ENCODE measurements at regions of chr11 and their contacts with region 1.

Region 1: DNA sequence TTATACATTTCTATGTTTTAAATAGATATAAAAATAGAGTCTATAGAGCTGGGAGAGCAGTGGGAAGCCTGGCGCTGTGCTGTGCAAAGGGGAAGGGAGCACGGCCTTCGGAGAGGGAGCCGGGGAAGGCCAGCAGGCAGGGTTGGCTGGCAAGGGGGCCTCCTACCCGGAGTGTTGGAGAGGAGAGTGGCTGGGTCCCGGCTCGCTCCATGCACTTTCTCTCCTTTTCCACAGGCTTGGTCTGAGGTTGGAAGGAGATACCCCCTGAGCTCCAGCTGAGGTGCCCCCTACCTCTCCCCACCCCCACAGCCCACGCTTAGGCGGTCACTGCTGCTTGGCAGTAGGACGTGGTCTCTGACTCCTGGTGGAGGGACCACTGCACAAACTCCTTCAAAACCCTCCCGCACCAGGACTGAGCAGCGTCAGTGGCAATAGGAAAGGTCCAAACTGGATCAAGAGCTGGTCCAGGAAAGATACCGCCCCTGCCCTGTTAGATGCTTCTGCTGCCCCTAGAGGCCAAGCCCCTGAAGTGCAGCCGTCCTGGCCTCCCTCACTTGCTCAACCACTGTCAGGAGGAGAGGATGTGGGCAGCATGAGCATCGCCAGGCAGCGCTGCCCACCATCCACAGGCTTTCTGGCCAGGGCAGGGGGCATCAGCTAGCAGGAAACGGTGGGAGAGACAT is 52.9 kb downstream of the SYT13 start:
- DNase-seq: peak; percentile 53 to 94
- H3K4me3 ChIP-seq: peak overlapping the region in 1 of 4 experiments; percentile 22; a peak in 1 of 8 replicates
- H3K27ac ChIP-seq: no peak overlapping the region
- H3K4me1 ChIP-seq: peaks cover 0 to 4% (median 2%) of the 10 kb centered on the region in 4 experiments; a peak in 2 of 7 replicates
- H3K27me3 ChIP-seq: no peaks in the 10 kb centered on the region
- CTCF ChIP-seq: peak; percentile 73 to 98 (median 94)
- EP300 ChIP-seq: no peak
- POLR2A ChIP-seq: no peak
- RAD21 ChIP-seq: peak; percentile 52 to 59

Region 2: DNA sequence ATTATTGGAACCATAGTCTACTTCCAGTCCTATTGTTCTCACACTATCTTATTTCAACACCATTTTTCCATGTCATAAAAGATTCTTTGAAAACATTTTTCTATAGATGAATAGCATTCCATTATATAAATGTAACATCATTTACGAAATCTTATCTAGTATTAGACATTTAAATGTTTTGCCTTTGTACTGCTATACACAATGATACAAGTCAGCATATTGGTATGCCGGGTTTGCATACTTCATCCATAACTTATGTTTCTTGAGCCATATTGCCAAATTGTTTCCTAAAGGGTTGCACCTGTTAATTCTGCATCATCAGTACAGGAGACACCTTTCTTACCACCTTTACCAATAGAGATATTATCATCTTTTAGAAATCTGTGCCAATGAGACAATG is 15.3 kb before region 1 on chr11:
- CTCF ChIA-PET with region 1: interaction called, 61 read pairs
- POLR2A ChIA-PET with region 1: no interaction called
- DNase-seq: no peak
- H3K4me3 ChIP-seq: no peak overlapping the region
- H3K27ac ChIP-seq: no peak overlapping the region
- H3K4me1 ChIP-seq: no peaks in the 10 kb centered on the region; a peak in 1 of 7 replicates
- H3K27me3 ChIP-seq: no peaks in the 10 kb centered on the region; a peak in 1 of 7 replicates
- CTCF ChIP-seq: no peak
- EP300 ChIP-seq: no peak
- POLR2A ChIP-seq: no peak
- RAD21 ChIP-seq: no peak